Dendritic cell treated with granulocyte-macrophage colony-stimulating factor and Interleukin-4, amounts not matched to agents 40 ng/mL and 50 ng/mL, for 4 days (primary cell): ENCODE measurements at regions of chr16 and their contacts with region 1.

Region 1: GRCh38 chr16:75385507-75386152 is 47.7 kb downstream of the CFDP1 start:
- H3K4me3 Mint-ChIP-seq: no peak overlapping the region
- H3K27ac Mint-ChIP-seq: no peak overlapping the region
- H3K4me1 Mint-ChIP-seq: peaks cover 9% of the 10 kb centered on the region
- H3K27me3 Mint-ChIP-seq: peaks cover 86% of the 10 kb centered on the region

Region 2: GRCh38 chr16:75198135-75198600 is 187.5 kb before region 1 on chr16:
- intact Hi-C with region 1: loop called (anchors 1 kb)
- H3K4me3 Mint-ChIP-seq: no peak overlapping the region
- H3K27ac Mint-ChIP-seq: no peak overlapping the region
- H3K4me1 Mint-ChIP-seq: peaks cover 6% of the 10 kb centered on the region
- H3K27me3 Mint-ChIP-seq: peaks cover 94% of the 10 kb centered on the region

Region 3: GRCh38 chr16:75234856-75235696 is 150.6 kb before region 1 on chr16:
- intact Hi-C with region 1: loop called (anchors 1 kb)
- H3K4me3 Mint-ChIP-seq: no peak overlapping the region
- H3K27ac Mint-ChIP-seq: no peak overlapping the region
- H3K4me1 Mint-ChIP-seq: no peaks in the 10 kb centered on the region
- H3K27me3 Mint-ChIP-seq: peaks cover 99% of the 10 kb centered on the region

Region 4: GRCh38 chr16:75415169-75415905 is 29.7 kb after region 1 on chr16:
- intact Hi-C with region 1: no loop called
- H3K4me3 Mint-ChIP-seq: no peak overlapping the region
- H3K27ac Mint-ChIP-seq: no peak overlapping the region
- H3K4me1 Mint-ChIP-seq: peaks cover 10% of the 10 kb centered on the region
- H3K27me3 Mint-ChIP-seq: no peaks in the 10 kb centered on the region